PC-9 (cell line): ENCODE measurements at regions of chr17 and their contacts with region 1.

Region 1: GRCh38 chr17:59311130-59311920 is 20.1 kb upstream of the YPEL2 start:
- DNase-seq: peak; percentile 42 to 62
- H3K4me3 ChIP-seq: no peak overlapping the region
- H3K27ac ChIP-seq: no peak overlapping the region
- H3K4me1 ChIP-seq: no peaks in the 10 kb centered on the region
- H3K27me3 ChIP-seq: no peaks in the 10 kb centered on the region
- CTCF ChIP-seq: peak; percentile 94

Region 2: DNA sequence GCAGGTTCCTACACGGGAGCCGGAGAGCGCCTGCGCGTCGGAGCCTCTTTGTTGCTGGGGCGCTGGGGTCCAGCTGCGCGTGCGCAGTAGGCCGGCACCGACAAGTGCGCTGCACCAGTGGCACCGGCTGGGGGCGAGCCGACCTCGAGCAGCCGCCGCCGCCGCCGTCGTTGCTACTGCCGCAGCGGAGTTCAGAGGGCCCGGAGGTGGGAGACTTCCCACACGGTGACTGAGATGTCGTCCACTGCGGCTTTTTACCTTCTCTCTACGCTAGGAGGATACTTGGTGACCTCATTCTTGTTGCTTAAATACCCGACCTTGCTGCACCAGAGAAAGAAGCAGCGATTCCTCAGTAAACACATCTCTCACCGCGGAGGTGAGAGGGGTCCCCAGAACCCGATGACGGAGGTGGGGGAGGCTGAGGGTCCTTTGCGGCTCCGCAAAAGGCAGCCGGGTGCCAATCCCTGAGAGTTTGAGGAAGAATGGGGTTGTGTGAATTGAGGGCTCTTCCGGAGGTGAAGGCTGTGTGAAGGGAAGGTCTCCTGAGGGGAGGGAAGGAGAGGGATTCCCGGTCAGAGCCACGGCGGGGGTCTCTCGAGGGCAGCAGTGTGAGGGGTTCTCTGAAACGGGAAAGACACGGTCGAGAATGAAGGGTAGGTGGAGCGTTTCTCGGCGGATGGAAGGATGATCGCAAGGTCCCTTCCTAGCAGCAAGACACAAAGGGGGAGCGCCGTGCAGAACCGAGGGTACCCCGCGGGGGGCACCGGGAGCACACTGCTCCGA is 90.8 kb before region 1 on chr17 and contains the start of gene GDPD1:
- CTCF ChIA-PET with region 1: interaction called, 3 read pairs
- POLR2A ChIA-PET with region 1: no interaction called
- intact Hi-C with region 1: loop called (anchors 2 kb)
- DNase-seq: peak; percentile 91 to 97
- H3K4me3 ChIP-seq: peak within 1 kb of the TSS; percentile 97
- H3K27ac ChIP-seq: peak within 1 kb of the TSS; percentile 57
- H3K4me1 ChIP-seq: peaks cover 23% of the 10 kb centered on the region
- H3K27me3 ChIP-seq: no peaks in the 10 kb centered on the region
- CTCF ChIP-seq: peak; percentile 77
- total RNA-seq, gene GDPD1: 3.1 and 3.4 TPM in 2 replicates

Region 3: DNA sequence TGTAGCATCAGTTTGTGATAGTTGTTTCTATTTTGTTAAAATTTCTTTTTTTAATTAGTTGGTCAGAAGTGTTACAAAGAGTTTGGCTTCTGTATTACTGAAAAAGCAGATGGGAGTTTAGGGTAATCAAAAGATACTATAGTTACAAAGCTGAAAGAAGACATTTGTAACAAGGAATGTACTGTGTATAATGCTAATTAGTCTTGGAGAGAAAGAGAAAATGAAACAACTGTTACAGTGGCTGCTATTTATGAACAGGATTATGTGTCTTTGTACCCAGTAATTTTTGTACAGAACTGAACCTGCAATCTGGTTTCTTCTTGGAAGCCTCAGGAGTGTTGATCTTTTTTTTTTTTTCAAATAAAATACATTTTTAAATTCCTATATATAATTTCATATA is 76.7 kb before region 1 on chr17:
- CTCF ChIA-PET with region 1: no interaction called
- POLR2A ChIA-PET with region 1: no interaction called
- intact Hi-C with region 1: no loop called
- DNase-seq: no peak
- H3K4me3 ChIP-seq: no peak overlapping the region
- H3K27ac ChIP-seq: no peak overlapping the region
- H3K4me1 ChIP-seq: no peaks in the 10 kb centered on the region
- H3K27me3 ChIP-seq: no peaks in the 10 kb centered on the region
- CTCF ChIP-seq: no peak

Region 4: DNA sequence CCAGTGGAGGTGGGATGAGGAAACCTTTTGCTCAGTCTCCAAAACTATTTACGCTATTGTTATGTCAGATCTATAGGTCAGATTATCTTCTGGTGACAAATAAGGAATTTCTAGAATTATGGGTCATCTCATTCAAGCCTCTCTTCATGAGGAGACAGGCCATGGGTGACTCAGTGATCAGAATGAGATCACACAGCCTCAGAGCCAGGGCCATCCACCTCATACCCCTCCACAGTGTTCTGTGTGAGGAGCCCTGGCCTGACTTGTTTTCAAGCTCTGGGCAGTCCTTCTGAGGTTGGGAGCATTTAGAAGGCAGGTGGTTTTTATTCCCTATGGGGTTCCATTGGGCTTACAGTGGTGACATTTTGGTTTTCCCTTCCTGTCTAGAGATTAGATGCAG is 46.6 kb after region 1 on chr17:
- CTCF ChIA-PET with region 1: no interaction called
- POLR2A ChIA-PET with region 1: no interaction called
- intact Hi-C with region 1: no loop called
- DNase-seq: peak in 1 of 2 experiments; percentile 40
- H3K4me3 ChIP-seq: no peak overlapping the region
- H3K27ac ChIP-seq: peak overlapping the region; percentile 9; the same call in 1 of the 2 replicates
- H3K4me1 ChIP-seq: peaks cover 26% of the 10 kb centered on the region
- H3K27me3 ChIP-seq: no peaks in the 10 kb centered on the region
- CTCF ChIP-seq: no peak

Region 5: GRCh38 chr17:59521204-59522126 is 210.1 kb after region 1 on chr17:
- CTCF ChIA-PET with region 1: interaction called, 8 read pairs
- POLR2A ChIA-PET with region 1: no interaction called
- intact Hi-C with region 1: loop called (anchors 1 kb)
- DNase-seq: peak in 1 of 2 experiments; percentile 59
- H3K4me3 ChIP-seq: no peak overlapping the region
- H3K27ac ChIP-seq: no peak overlapping the region
- H3K4me1 ChIP-seq: peaks cover 5% of the 10 kb centered on the region; the same call in 1 of the 2 replicates
- H3K27me3 ChIP-seq: no peaks in the 10 kb centered on the region
- CTCF ChIP-seq: peak; percentile 97

Region 6: GRCh38 chr17:59565171-59565969 is 254.0 kb after region 1 on chr17 and contains the start of gene DHX40:
- CTCF ChIA-PET with region 1: interaction called, 11 read pairs
- POLR2A ChIA-PET with region 1: no interaction called
- intact Hi-C with region 1: no loop called
- DNase-seq: peak; percentile 76 to 79
- H3K4me3 ChIP-seq: peak within 1 kb of the TSS; percentile 90
- H3K27ac ChIP-seq: no peak within 1 kb of the TSS; the same call in 1 of the 2 replicates
- H3K4me1 ChIP-seq: peaks cover 9% of the 10 kb centered on the region; the same call in 1 of the 2 replicates
- H3K27me3 ChIP-seq: no peaks in the 10 kb centered on the region
- CTCF ChIP-seq: no peak
- total RNA-seq, gene DHX40: 32.8 and 38.9 TPM in 2 replicates

Region 7: GRCh38 chr17:60036796-60037612 is 725.7 kb after region 1 on chr17:
- CTCF ChIA-PET with region 1: interaction called, 3 read pairs
- POLR2A ChIA-PET with region 1: no interaction called
- intact Hi-C with region 1: loop called (anchors 10 kb)
- DNase-seq: peak; percentile 71 to 72
- H3K4me3 ChIP-seq: no peak overlapping the region
- H3K27ac ChIP-seq: no peak overlapping the region
- H3K4me1 ChIP-seq: no peaks in the 10 kb centered on the region
- H3K27me3 ChIP-seq: no peaks in the 10 kb centered on the region
- CTCF ChIP-seq: peak; percentile 93